ENCODE measurements at regions of chr11 and their contacts with region 1.

Region 1: DNA sequence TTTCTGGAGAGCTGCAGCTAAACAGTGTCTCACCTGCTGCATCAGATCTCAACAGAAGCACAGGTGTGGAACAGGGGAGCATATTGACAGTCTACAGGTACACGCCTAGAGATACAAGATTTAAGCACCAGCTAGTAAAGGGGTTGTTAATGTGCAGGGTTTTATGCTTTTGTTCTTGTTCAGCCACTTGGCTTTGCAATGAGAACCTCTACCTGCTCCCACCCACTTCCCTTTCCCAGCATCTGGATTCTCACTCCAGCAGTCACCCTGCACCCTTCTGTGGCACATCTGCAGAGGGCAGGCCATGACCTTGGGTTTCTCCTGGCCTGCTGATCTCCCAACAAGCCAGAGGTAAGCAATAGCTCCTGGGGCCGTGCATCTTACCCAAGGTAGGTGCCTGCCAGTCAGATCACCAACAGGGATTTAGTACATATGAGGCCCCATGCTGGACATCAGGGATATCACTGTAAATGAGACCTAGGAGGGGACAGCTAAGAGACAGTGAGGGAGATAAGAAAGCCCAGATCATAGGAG is 446.6 kb downstream of the BUD13 start:
- DNase-seq: no peak
- H3K4me3 ChIP-seq: no peak overlapping the region
- H3K27ac ChIP-seq: no peak overlapping the region
- H3K4me1 ChIP-seq: no peaks in the 10 kb centered on the region
- H3K27me3 ChIP-seq: no peaks in the 10 kb centered on the region
- CTCF ChIP-seq: no peak
- EP300 ChIP-seq: no peak
- POLR2A ChIP-seq: no peak

Region 2: DNA sequence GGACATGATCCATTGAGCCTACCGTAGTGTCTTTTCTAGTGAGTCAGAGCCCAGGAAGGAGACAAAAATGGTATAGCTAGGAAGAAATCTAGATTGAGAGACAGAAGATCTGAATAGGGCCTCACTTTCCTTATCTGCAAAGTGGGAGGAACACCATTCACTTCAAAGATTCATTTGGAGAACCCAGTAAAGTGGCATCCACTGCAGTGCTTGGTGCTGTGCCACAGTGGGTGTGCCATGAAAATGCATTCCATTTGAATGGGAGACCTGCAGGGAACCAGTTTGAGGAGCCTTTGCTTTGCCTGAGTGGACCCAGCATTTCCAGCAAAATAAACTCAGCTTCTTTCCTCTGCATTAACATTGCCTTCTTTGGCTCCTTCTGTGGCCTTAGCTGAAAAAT is 351.5 kb before region 1 on chr11:
- in situ Hi-C with region 1: no loop called
- intact Hi-C with region 1: no loop called
- DNase-seq: no peak
- H3K4me3 ChIP-seq: no peak overlapping the region
- H3K27ac ChIP-seq: no peak overlapping the region
- H3K4me1 ChIP-seq: peaks cover 0 to 9% (median 0%) of the 10 kb centered on the region in 4 donors
- H3K27me3 ChIP-seq: peaks cover 17% of the 10 kb centered on the region
- CTCF ChIP-seq: no peak
- EP300 ChIP-seq: no peak
- POLR2A ChIP-seq: no peak

Region 3: DNA sequence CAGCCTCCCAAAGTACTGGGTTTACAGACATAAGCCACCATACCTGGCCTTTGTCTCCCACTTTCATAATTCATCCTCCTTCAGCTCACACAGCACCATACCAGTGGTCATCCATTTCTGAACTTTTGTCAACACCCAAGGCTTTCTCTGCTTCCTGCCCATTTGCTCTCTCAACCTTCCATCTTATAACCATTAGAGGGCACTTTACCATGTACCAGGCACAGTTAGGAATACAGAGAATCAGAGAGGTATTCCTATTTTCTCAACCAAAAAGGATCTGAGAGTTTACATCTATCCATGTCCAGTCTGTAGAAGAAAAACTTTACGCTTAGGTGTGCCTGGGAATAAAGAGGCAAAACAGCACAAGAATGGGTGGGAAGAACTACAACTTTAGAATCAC is 49.0 kb after region 1 on chr11:
- in situ Hi-C with region 1: no loop called
- intact Hi-C with region 1: loop called (anchors 2 kb)
- DNase-seq: no peak
- H3K4me3 ChIP-seq: no peak overlapping the region
- H3K27ac ChIP-seq: no peak overlapping the region
- H3K4me1 ChIP-seq: no peaks in the 10 kb centered on the region
- H3K27me3 ChIP-seq: no peaks in the 10 kb centered on the region
- CTCF ChIP-seq: no peak
- EP300 ChIP-seq: no peak
- POLR2A ChIP-seq: no peak

Measured in transverse colon (tissue), 4 donors.